ENCODE measurements at regions of chr3 and their contacts with region 1.

Region 1: DNA sequence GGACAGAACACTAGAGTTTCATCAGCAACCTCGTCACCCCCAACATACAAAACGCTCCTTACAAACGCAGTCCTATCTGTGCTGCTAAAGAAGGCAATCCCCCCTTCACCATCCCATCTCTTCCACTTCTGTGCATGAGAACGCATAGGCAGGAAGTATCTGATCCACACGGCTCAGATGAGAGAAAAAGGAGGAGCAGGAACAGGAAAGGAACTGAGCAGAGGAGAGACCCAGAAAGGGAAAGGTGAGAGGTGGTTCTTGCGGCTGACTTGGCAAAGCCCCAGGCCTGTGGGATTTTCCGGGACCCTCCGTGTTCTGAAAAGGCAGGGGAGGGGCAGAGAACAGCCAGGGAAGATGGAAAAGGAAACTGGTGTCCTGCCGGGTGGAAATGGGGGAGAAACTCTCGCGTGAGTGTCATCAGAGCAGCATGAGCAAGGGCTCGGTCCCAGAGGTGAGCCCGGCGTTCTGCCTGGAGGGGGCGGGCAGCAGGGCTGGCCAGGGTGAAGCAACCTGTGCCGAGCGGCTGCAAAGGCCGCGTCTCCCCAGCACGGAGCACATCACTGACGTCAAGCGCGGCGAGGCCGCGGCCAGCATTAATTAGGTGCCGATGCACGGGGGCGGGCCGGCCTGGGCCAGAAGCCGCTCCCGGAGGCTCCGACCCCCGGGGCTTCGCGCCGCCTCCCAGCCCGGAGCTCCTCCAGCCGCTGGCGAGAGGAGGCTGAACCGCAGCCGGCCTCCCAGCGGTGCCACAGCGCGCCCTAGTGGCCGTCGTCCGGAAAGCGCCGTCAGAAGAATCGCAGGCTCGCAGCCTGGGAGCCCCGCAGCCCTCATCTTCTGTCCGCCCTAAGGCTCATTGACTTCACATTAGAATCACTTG is 35.8 kb downstream of the CPN2 start:
- DNase-seq: peak; percentile 84
- H3K4me3 ChIP-seq: peak overlapping the region; percentile 18 to 44 (median 37)
- H3K27ac ChIP-seq: peak overlapping the region; percentile 45
- H3K4me1 ChIP-seq: peaks cover 7% of the 10 kb centered on the region
- H3K27me3 ChIP-seq: peaks cover 4 to 5% of the 10 kb centered on the region in 2 experiments
- CTCF ChIP-seq: peak; percentile 86 to 92
- POLR2A ChIP-seq: no peak

Region 2: DNA sequence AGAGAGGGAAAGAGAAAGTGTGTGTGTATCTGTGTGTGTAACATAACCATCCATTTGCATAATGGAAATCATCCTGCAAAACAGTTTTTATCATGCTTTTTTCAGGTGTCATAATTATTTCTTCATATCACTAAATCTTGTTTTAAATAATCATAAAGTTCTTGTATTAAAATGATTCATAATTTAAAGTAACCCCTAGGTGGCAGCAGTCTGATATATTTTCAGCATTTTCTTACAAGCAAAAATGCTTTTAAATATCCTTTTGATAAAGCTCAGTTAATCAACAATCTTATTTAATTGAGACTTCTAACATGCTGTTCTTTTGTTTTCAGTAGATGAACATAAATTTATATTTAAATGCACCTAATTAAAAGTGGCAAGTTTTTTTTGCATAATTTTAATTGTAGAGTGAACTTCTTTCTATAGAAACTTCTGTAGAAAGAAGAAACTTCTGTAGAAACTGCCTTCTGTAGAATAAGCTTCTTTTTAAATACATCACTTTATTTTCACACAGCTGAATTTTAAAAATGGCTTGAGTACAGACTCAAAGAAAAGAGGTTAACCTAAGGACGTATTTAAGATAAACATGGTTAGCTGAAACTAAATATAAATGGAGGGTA is 649.8 kb before region 1 on chr3:
- CTCF ChIA-PET with region 1: interaction called, 72 read pairs
- POLR2A ChIA-PET with region 1: no interaction called
- dilution Hi-C with region 1: no loop called
- intact Hi-C with region 1: loop called (anchors 1 kb)
- DNase-seq: peak; percentile 57
- H3K4me3 ChIP-seq: no peak overlapping the region
- H3K27ac ChIP-seq: no peak overlapping the region
- H3K4me1 ChIP-seq: no peaks in the 10 kb centered on the region
- H3K27me3 ChIP-seq: no peaks in the 10 kb centered on the region
- CTCF ChIP-seq: peak in 1 of 2 donors; percentile 22
- POLR2A ChIP-seq: no peak

Region 3: GRCh38 chr3:193788189-193788991 is 526.9 kb before region 1 on chr3:
- CTCF ChIA-PET with region 1: interaction called, 355 read pairs
- POLR2A ChIA-PET with region 1: no interaction called
- dilution Hi-C with region 1: no loop called
- intact Hi-C with region 1: loop called (anchors 1 kb)
- DNase-seq: peak; percentile 76
- H3K4me3 ChIP-seq: no peak overlapping the region
- H3K27ac ChIP-seq: no peak overlapping the region
- H3K4me1 ChIP-seq: peaks cover 5% of the 10 kb centered on the region
- H3K27me3 ChIP-seq: peaks cover 0 to 1% of the 10 kb centered on the region in 2 experiments
- CTCF ChIP-seq: peak; percentile 82 to 88
- POLR2A ChIP-seq: no peak

Region 4: GRCh38 chr3:194058189-194058571 is 257.1 kb before region 1 on chr3:
- CTCF ChIA-PET with region 1: interaction called, 10 read pairs
- POLR2A ChIA-PET with region 1: no interaction called
- dilution Hi-C with region 1: no loop called
- intact Hi-C with region 1: no loop called
- DNase-seq: peak; percentile 60
- H3K4me3 ChIP-seq: peak overlapping the region in 1 of 3 experiments; percentile 29
- H3K27ac ChIP-seq: no peak overlapping the region
- H3K4me1 ChIP-seq: peaks cover 4% of the 10 kb centered on the region
- H3K27me3 ChIP-seq: no peaks in the 10 kb centered on the region
- CTCF ChIP-seq: peak in 1 of 2 donors; percentile 1
- POLR2A ChIP-seq: no peak

Region 5: GRCh38 chr3:194134757-194135528 is 180.4 kb before region 1 on chr3:
- CTCF ChIA-PET with region 1: interaction called, 338 read pairs
- POLR2A ChIA-PET with region 1: interaction called, 9 read pairs
- dilution Hi-C with region 1: no loop called
- intact Hi-C with region 1: loop called (anchors 1 kb)
- DNase-seq: peak; percentile 99
- H3K4me3 ChIP-seq: peak overlapping the region in 2 of 3 experiments; percentile 13 to 51
- H3K27ac ChIP-seq: peak overlapping the region; percentile 96
- H3K4me1 ChIP-seq: peaks cover 24% of the 10 kb centered on the region
- H3K27me3 ChIP-seq: no peaks in the 10 kb centered on the region
- CTCF ChIP-seq: no peak
- POLR2A ChIP-seq: peak; percentile 27

Region 6: GRCh38 chr3:194277104-194277785 is 38.1 kb before region 1 on chr3:
- CTCF ChIA-PET with region 1: interaction called, 101 read pairs
- POLR2A ChIA-PET with region 1: no interaction called
- dilution Hi-C with region 1: no loop called
- intact Hi-C with region 1: no loop called
- DNase-seq: peak; percentile 75
- H3K4me3 ChIP-seq: no peak overlapping the region
- H3K27ac ChIP-seq: no peak overlapping the region
- H3K4me1 ChIP-seq: peaks cover 18% of the 10 kb centered on the region
- H3K27me3 ChIP-seq: no peaks in the 10 kb centered on the region
- CTCF ChIP-seq: no peak
- POLR2A ChIP-seq: no peak

Measured in endothelial cell of umbilical vein (primary cell).